Activated CD4-positive, alpha-beta T cell treated with anti-CD3 and anti-CD28 coated beads, Interleukin-2, amount 10 ng/mL, durations not matched to agents 24 days and 14 days (primary cell): ENCODE measurements at regions of chr6 and their contacts with region 1.

Region 1: GRCh38 chr6:26457806-26458688 is at the start of gene BTN2A1:
- DNase-seq: peak; percentile 92
- H3K4me3 Mint-ChIP-seq: peak within 1 kb of the TSS; percentile 95
- H3K27ac Mint-ChIP-seq: peak within 1 kb of the TSS; percentile 94
- H3K4me1 Mint-ChIP-seq: peaks cover 48% of the 10 kb centered on the region
- H3K27me3 Mint-ChIP-seq: no peaks in the 10 kb centered on the region
- total RNA-seq, gene BTN2A1: 16.5 and 19.8 TPM in 2 replicates

Region 2: DNA sequence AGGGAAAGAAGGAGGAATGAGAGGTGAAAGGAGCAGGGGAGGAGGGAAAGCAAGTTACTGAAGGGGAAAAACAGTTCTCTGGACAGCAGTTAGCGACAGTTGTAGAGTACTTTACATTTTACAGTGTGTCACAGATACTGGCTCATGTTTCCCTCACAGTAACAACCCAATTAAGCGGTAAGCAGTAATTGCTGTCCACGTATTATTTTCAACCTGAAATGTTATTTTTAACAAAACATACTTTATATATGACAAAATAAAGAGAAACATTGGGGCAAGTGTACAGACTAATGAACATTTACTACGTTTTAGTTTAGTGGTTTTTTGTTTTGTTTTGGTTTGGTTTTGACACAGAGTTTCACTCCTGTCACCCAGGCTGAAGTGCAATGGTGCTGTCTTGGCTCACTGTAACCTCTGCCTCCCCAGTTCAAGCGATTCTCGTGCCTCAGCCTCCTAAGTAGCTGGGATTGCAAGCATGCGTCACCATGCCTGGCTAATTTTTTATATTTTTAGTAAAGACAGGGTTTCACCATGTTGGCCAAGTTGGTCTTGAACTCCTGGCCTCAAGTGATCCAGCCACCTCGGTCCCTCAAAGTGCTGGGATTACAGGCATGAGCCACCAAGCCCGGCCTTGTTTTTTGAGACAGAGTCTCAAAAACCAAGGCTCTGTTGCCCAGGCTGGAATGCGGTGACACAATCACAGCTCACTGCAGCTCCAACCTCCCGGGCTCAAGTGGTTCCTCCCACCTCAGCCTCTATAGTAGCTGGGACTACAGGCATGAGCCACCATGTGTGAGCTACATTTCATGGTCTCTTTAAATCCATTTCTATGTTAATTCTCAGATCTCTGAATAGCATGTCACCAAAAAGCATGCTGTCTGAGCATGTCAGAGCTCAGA is 115.7 kb before region 1 on chr6:
- intact Hi-C with region 1: loop called (anchors 5 kb)
- DNase-seq: peak; percentile 71
- H3K4me3 Mint-ChIP-seq: peak overlapping the region; percentile 92
- H3K27ac Mint-ChIP-seq: peak overlapping the region; percentile 84
- H3K4me1 Mint-ChIP-seq: peaks cover 16% of the 10 kb centered on the region
- H3K27me3 Mint-ChIP-seq: peaks cover 5% of the 10 kb centered on the region

Region 3: GRCh38 chr6:26473758-26474438 is 15.9 kb after region 1 on chr6:
- intact Hi-C with region 1: loop called (anchors 1 kb)
- DNase-seq: peak; percentile 95
- H3K4me3 Mint-ChIP-seq: peak overlapping the region; percentile 96
- H3K27ac Mint-ChIP-seq: peak overlapping the region; percentile 100
- H3K4me1 Mint-ChIP-seq: peaks cover 30% of the 10 kb centered on the region
- H3K27me3 Mint-ChIP-seq: no peaks in the 10 kb centered on the region